Activated CD4-positive, alpha-beta T cell treated with anti-CD3 and anti-CD28 coated beads, Interleukin-2, amount 10 ng/mL, durations not matched to agents 24 days and 14 days (primary cell): ENCODE measurements at regions of chr4 and their contacts with region 1.

Region 1: GRCh38 chr4:159175085-159175988 is 72.5 kb downstream of the RAPGEF2 start:
- DNase-seq: peak; percentile 87
- H3K4me3 Mint-ChIP-seq: peak overlapping the region; percentile 3
- H3K27ac Mint-ChIP-seq: no peak overlapping the region
- H3K4me1 Mint-ChIP-seq: peaks cover 48% of the 10 kb centered on the region
- H3K27me3 Mint-ChIP-seq: no peaks in the 10 kb centered on the region

Region 2: GRCh38 chr4:158094413-158095134 is 1080.8 kb before region 1 on chr4:
- intact Hi-C with region 1: no loop called
- DNase-seq: no peak
- H3K4me3 Mint-ChIP-seq: no peak overlapping the region
- H3K27ac Mint-ChIP-seq: no peak overlapping the region
- H3K4me1 Mint-ChIP-seq: no peaks in the 10 kb centered on the region
- H3K27me3 Mint-ChIP-seq: no peaks in the 10 kb centered on the region

Region 3: DNA sequence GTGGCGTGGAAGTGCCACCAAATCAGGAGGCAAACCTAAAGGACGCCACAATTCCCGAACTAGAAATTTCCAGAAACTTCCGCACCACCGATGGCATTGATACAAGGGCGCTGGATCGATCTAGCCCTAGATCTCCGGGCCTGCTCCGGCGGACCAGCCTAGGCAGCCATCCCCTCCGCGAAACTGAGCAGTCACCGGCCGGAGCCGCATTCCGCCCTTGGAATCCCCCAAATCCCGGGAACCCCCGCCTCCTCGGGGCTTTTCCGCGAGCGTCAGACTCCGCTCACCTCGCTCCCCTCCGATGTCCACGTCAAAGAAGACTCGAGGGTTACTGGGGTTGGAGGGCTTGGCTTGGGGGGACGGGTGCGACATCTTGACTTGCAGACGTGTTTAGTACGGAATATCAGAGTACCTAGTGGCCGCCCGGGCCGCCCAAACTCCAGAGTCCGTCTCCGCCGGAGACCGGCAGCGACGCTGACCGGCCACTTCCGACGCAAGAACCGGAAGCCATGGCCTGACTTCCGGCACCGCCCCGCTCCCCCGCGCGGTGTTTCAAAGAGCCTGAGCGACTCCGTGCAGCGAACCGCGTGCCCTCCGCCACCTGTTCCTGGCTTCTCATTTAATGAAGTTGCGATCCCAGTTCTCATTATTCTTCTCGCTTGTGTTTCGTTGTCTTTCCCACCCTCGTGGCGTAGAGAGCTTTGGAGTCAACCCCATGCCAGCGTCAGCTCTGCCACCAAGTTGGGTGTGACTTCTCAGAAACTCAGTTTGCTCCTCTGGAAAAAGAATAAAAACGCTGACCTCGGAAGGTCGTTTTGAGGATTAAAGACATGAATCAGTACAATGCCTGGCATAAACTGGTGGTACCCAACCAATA is 452.2 kb before region 1 on chr4 and contains the start of gene PPID:
- intact Hi-C with region 1: loop called (anchors 2 kb)
- DNase-seq: peak; percentile 96
- H3K4me3 Mint-ChIP-seq: peak within 1 kb of the TSS; percentile 95
- H3K27ac Mint-ChIP-seq: peak within 1 kb of the TSS; percentile 99
- H3K4me1 Mint-ChIP-seq: peaks cover 45% of the 10 kb centered on the region
- H3K27me3 Mint-ChIP-seq: no peaks in the 10 kb centered on the region
- total RNA-seq, gene PPID: 62.9 and 64.7 TPM in 2 replicates

Region 4: DNA sequence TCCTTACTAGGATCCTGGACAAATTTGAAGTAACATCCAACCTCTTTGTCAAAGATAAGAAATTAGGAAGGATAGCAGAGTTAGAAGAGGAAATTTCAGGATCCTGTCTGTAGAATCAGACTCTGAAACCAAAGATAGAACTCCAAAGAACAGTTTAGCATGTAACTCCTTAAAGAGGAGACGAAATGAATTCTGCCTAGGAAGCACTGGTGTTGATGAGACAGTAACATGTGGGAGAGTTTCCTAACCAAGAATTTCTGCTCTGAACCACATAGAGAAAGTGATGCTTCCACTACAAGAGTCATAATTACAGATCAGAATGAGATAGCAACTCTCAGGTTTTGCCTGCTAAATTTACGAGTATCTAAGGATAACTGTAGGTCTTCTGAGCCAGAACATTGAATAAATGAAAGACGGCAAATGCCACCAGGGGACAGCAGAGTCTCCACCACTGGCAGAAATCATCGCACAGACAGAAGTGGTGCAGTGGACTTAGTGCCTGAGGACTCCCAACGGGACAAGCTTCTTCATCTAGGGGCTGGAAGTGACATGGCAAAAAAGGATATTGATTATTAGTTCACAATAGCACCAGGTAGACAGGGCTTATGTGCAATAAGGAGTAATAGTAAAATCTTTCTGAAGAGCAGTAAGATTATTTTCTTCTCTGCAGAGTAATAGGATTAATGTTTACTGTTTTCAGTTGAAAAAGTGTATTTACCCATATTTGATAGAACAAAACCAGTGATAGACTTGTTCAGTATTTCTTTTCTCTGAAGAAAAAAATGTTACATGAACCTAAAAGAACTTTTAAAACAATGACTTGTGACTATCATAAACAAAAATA is 445.4 kb before region 1 on chr4:
- intact Hi-C with region 1: loop called (anchors 1 kb)
- DNase-seq: peak; percentile 85
- H3K4me3 Mint-ChIP-seq: no peak overlapping the region
- H3K27ac Mint-ChIP-seq: no peak overlapping the region
- H3K4me1 Mint-ChIP-seq: peaks cover 26% of the 10 kb centered on the region
- H3K27me3 Mint-ChIP-seq: peaks cover 13% of the 10 kb centered on the region

Region 5: GRCh38 chr4:158856852-158857251 is 318.5 kb before region 1 on chr4:
- intact Hi-C with region 1: loop called (anchors 1 kb)
- DNase-seq: peak; percentile 63
- H3K4me3 Mint-ChIP-seq: no peak overlapping the region
- H3K27ac Mint-ChIP-seq: no peak overlapping the region
- H3K4me1 Mint-ChIP-seq: peaks cover 6% of the 10 kb centered on the region
- H3K27me3 Mint-ChIP-seq: no peaks in the 10 kb centered on the region

Region 6: GRCh38 chr4:158873795-158874401 is 301.4 kb before region 1 on chr4:
- intact Hi-C with region 1: loop called (anchors 5 kb)
- DNase-seq: peak; percentile 63
- H3K4me3 Mint-ChIP-seq: no peak overlapping the region
- H3K27ac Mint-ChIP-seq: peak overlapping the region; percentile 67
- H3K4me1 Mint-ChIP-seq: peaks cover 10% of the 10 kb centered on the region
- H3K27me3 Mint-ChIP-seq: no peaks in the 10 kb centered on the region

Region 7: DNA sequence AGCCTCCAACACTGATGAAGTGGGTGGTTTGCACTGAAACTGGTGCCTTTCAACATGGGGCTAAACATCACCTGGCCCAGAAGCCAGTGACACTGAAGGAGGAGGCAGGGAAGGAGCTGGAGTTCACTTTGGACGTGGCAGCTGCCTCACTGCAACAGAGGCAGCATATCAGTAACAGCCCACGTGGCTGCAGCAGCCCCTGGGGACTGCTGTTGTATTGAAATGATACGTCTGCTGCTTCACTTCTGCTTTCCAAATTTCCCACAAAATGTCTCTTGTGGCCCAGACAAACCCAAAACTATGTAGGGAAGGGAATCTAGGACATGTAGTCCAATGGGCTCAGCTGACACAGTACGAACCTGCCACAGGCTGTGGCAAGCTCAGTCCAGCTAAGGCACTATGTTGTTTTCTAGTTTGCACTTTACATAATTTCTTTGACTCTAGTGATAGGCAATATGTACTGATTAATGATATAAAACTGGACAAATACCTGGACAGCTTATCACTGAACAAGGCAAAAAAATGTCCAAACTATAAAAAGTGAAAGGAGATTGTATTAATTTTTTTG is 157.2 kb before region 1 on chr4:
- intact Hi-C with region 1: no loop called
- DNase-seq: no peak
- H3K4me3 Mint-ChIP-seq: no peak overlapping the region
- H3K27ac Mint-ChIP-seq: no peak overlapping the region
- H3K4me1 Mint-ChIP-seq: no peaks in the 10 kb centered on the region
- H3K27me3 Mint-ChIP-seq: peaks cover 3% of the 10 kb centered on the region

Region 8: GRCh38 chr4:159413306-159413943 is 238.1 kb after region 1 on chr4:
- intact Hi-C with region 1: no loop called
- DNase-seq: no peak
- H3K4me3 Mint-ChIP-seq: no peak overlapping the region
- H3K27ac Mint-ChIP-seq: no peak overlapping the region
- H3K4me1 Mint-ChIP-seq: no peaks in the 10 kb centered on the region
- H3K27me3 Mint-ChIP-seq: peaks cover 5% of the 10 kb centered on the region

Region 9: DNA sequence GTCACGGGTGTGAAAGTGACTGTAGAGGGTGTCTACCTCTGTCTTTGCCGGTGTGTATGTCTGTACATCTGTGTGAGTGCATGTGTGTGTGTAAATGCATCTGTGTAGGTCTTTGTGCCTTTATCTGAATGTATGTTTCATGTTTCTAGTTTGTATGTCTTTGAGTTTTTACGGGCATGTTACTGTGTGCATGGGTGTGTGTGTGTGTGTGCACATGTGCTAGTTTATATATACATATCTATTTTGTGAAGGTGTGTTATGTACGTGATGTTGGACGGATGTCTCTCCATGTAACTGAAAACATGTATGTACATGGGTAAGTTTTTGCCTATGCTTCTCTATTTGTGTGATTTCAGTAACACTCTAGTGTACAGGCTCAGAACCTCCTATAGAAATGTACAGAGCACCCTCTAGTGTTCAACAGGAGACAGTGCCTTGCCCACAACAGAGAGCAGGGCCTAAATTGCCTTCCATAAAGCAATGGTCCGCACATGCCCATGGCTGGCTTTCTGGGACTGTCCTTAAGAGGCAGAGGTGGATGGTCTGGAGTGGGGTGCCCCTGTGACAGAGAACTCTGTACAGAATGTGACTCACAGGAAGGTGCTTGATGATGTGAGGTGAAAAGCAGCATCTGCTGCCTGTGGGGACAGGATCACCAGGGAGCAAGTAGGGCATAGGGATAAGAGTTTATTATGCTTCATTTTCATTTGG is 271.1 kb after region 1 on chr4:
- intact Hi-C with region 1: loop called (anchors 5 kb)
- DNase-seq: peak; percentile 75
- H3K4me3 Mint-ChIP-seq: no peak overlapping the region
- H3K27ac Mint-ChIP-seq: no peak overlapping the region
- H3K4me1 Mint-ChIP-seq: no peaks in the 10 kb centered on the region
- H3K27me3 Mint-ChIP-seq: peaks cover 5% of the 10 kb centered on the region